Panc1 (cell line): ENCODE measurements at regions of chr12 and their contacts with region 1.

Region 1: GRCh38 chr12:26884765-26885576 is 52.0 kb upstream of the ITPR2 start:
- DNase-seq: peak; percentile 77
- ATAC-seq: peak; percentile 96
- H3K4me3 ChIP-seq: peak overlapping the region in 1 of 2 experiments; percentile 23; a peak in 1 of 4 replicates
- H3K27ac ChIP-seq: no peak overlapping the region
- H3K4me1 ChIP-seq: no peaks in the 10 kb centered on the region
- H3K27me3 ChIP-seq: no peaks in the 10 kb centered on the region
- CTCF ChIP-seq: peak; percentile 99

Region 2: DNA sequence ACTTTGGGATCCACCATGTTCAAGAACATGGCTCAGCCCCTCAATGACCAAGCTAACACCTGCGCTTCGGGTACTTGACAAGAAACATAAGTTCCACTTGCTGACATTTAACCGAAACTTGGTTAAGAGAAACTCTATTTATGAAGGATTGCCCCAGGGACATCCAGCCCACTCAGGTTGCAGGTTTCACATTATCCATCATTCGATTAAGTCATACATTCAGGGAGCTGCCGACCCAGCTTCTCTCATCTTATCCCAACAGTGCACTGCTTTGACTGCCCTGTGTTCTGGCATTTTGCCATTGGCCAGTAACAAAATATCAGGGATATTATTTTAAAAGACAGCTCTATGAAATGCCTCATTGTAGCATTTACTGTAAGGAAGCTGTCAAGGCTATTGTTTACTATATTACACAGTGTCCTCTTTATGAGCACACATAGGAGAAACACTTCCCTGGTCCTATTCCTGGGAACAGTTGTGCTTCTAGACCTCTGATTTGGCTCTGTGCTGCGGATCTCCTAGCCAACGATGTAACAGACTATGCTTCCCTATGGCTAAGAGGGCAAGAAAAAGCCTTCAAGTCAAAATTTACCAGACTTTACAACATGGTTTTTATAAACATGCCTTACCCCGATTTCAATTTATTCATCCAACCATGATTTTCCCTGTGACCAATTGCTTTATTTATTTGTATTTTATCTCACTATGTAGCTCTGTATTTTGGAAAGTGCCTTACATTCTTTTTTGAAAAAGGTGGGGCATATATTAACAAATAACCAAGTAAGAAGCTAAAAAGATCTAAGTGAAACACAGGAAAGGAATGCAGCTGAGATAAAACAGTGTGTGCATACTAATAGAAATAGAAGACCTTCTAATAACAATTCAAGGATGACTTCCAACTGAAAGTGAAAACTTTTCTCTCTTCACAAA is 161.3 kb before region 1 on chr12:
- CTCF ChIA-PET with region 1: no interaction called
- POLR2A ChIA-PET with region 1: no interaction called
- in situ Hi-C with region 1: no loop called
- intact Hi-C with region 1: loop called (anchors 5 kb)
- DNase-seq: no peak
- ATAC-seq: no peak
- H3K4me3 ChIP-seq: no peak overlapping the region
- H3K27ac ChIP-seq: no peak overlapping the region
- H3K4me1 ChIP-seq: no peaks in the 10 kb centered on the region
- H3K27me3 ChIP-seq: no peaks in the 10 kb centered on the region
- CTCF ChIP-seq: no peak

Region 3: DNA sequence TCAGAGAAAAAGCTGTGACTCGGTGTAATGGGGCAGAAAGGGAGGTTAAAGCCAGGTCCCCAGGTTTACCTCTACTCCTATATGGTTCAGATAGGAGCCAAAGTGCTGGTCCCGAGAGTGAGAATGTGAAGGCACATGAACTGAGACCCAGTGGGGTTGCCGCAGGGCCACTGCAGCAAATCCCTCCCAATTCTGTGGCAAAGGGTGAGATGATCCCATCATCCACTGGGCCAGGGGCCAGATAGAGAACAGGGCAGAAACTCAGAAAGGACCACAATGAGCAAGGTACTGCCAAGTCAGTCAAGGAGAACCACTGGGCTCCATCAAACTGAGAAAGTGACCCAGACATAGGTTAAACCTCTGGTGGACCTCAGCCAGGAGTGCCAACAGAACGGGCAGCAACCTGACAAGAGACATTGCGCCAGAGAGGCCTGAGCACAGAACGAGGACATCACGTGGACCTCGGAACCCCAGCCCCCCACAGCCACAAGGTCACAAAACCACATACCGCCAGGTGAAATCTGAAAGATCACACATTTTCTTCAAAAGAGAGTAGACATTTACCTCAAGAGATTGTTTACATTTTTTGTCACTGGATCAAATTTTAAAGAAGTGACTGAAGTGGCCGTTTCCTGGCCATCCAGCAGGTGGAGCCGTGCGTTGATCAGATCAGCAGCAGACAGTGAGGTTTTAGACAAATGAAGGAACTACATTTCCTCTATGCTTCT is 31.5 kb before region 1 on chr12:
- CTCF ChIA-PET with region 1: interaction called, 4 read pairs
- POLR2A ChIA-PET with region 1: no interaction called
- in situ Hi-C with region 1: no loop called
- intact Hi-C with region 1: loop called (anchors 2 kb)
- DNase-seq: no peak
- ATAC-seq: peak; percentile 95
- H3K4me3 ChIP-seq: 0 out of 4 replicates have a peak overlapping the region, but pooled peaks of 1 of the 2 experiments have one; percentile 12
- H3K27ac ChIP-seq: no peak overlapping the region
- H3K4me1 ChIP-seq: peaks cover 3% of the 10 kb centered on the region; the same call in 1 of the 2 replicates
- H3K27me3 ChIP-seq: no peaks in the 10 kb centered on the region; the same call in 1 of the 2 replicates
- CTCF ChIP-seq: peak; percentile 97

Region 4: DNA sequence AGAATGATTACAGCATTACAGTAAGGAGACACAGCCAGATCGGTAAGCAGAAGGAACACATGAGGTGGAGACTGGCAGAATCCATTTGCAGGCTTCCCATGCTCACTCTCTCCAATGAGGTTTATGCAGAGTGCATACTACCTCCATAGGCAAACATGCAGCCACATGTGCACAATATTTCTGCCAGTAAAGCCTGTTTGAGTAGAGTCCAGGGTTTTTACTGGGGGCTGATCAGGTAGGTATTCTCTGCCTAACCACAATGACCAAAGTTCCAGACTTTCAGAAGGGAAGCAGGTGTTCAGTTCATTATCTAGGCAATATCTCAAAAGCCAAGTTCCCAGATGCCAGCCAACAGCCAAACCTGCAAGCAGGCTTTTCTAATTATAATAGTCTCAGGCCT is 21.7 kb after region 1 on chr12:
- CTCF ChIA-PET with region 1: no interaction called
- POLR2A ChIA-PET with region 1: no interaction called
- in situ Hi-C with region 1: no loop called
- intact Hi-C with region 1: no loop called
- DNase-seq: no peak
- ATAC-seq: no peak
- H3K4me3 ChIP-seq: no peak overlapping the region
- H3K27ac ChIP-seq: no peak overlapping the region
- H3K4me1 ChIP-seq: no peaks in the 10 kb centered on the region
- H3K27me3 ChIP-seq: no peaks in the 10 kb centered on the region
- CTCF ChIP-seq: no peak

Region 5: DNA sequence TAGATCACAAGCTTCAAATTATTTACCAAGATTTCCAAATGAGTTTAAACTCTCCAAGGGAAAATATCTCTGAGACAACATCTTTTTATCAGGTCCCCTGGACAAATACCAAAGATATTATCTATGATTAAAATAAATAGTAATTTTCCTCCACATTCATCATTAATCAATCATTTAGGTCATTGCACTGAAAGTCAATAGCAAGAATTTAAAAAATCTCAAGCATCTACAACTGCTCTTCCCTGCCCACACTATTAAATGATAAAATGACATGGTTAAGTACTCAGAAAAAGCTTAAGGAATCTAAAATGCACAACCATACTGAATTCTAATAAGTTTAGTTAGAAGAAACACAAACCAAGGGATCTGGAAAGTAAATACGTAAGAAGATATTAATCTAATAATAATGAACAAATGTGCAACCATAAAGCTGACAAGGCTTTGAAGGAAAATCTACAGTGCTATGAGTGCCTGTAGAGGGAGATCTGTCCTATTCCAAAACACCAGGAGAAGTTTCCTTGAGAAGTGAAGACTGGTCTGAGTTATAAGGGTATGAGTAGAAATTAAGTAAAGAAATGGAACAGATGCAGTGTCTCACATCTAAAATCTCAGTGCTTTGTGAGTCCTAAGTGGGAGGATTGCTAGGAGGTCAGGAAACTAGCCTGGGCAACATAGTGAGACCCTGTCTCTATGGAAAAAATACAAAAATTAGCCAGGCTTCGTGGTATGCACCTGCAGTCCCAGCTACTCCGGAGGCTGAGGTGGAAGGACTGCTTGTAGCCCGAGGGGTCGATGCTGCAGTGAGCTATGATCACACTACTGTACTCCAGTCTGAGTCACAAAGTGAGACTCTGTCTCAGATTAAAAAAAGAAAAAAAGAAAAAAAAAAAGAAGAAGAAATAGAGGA is 33.6 kb after region 1 on chr12:
- CTCF ChIA-PET with region 1: no interaction called
- POLR2A ChIA-PET with region 1: no interaction called
- in situ Hi-C with region 1: no loop called
- intact Hi-C with region 1: no loop called
- DNase-seq: no peak
- ATAC-seq: 0 out of 2 replicates have a peak, but pooled peaks have one; percentile 42
- H3K4me3 ChIP-seq: no peak overlapping the region
- H3K27ac ChIP-seq: no peak overlapping the region
- H3K4me1 ChIP-seq: no peaks in the 10 kb centered on the region
- H3K27me3 ChIP-seq: no peaks in the 10 kb centered on the region
- CTCF ChIP-seq: no peak; the same call in 1 of the 2 replicates

Region 6: DNA sequence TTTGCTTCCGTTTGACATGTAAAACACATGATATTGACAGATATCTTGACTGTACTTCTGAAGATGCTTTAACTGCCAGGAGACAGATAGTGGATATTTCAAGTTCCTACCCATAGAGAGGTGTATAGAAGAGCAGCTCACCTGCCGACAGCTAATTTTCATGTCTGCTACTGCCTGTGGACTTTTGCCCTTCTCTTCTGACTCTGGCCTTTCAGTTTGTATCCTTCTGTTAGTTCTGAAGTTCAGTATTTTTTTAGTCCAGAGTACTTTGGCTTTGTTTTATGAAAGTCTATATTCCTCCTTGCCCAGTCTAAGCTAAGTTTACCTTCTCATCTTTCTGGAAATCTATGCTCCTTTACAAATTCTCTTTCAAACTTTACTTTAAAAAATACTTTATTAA is 328.3 kb after region 1 on chr12:
- CTCF ChIA-PET with region 1: no interaction called
- POLR2A ChIA-PET with region 1: interaction called, 10 read pairs
- in situ Hi-C with region 1: no loop called
- intact Hi-C with region 1: no loop called
- DNase-seq: no peak
- ATAC-seq: no peak
- H3K4me3 ChIP-seq: no peak overlapping the region
- H3K27ac ChIP-seq: no peak overlapping the region
- H3K4me1 ChIP-seq: no peaks in the 10 kb centered on the region
- H3K27me3 ChIP-seq: no peaks in the 10 kb centered on the region
- CTCF ChIP-seq: no peak